Right ventricle myocardium inferior (tissue), 1 donor: ENCODE measurements at regions of chr10 and their contacts with region 1.

Region 1: DNA sequence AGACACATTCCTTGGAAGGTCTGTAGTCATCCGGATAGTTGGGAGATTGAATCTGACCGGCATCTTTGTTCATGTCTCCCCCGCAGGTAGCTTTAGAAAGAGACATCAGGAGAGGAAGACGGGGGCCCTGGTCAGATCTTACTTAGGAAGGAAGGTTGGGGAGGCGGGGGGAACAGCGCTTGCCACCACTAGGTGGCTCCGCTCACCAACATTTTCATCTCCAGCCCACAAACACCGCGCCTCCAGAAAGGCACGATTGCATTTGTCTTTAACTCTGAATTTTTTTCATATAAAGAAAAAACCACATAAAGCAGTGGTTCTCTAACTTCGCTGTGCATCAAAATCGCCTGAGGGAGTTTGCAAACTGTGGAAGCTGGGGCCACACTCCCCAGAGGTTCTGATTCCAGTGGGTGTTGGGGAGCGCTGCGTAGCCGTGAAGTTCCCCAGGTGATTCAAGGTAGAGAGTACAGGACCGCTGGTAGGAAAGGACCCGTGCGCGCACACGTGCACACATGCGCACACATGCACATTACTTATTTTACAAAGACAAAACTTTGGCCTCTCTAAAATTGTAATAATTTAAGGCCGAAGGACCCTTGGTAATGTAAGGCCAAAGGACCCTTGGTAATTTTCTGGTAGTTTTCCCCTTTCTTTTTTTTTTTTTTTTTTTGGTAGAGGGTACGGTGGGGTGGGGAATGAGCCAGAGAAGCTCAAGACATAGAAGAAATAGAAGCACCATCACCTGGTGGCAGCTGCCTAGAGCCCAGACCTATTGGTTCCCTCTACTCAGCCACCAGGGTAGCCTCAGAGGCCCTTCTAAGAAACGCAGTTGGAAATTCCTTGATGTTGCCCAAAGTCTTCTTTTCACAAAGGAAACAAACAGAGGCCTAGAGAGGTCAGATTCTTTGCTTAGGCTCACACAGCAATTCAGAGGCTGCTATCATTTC is 37.4 kb upstream of the OPALIN start:
- DNase-seq: no peak
- ATAC-seq: peak; percentile 56

Region 2: DNA sequence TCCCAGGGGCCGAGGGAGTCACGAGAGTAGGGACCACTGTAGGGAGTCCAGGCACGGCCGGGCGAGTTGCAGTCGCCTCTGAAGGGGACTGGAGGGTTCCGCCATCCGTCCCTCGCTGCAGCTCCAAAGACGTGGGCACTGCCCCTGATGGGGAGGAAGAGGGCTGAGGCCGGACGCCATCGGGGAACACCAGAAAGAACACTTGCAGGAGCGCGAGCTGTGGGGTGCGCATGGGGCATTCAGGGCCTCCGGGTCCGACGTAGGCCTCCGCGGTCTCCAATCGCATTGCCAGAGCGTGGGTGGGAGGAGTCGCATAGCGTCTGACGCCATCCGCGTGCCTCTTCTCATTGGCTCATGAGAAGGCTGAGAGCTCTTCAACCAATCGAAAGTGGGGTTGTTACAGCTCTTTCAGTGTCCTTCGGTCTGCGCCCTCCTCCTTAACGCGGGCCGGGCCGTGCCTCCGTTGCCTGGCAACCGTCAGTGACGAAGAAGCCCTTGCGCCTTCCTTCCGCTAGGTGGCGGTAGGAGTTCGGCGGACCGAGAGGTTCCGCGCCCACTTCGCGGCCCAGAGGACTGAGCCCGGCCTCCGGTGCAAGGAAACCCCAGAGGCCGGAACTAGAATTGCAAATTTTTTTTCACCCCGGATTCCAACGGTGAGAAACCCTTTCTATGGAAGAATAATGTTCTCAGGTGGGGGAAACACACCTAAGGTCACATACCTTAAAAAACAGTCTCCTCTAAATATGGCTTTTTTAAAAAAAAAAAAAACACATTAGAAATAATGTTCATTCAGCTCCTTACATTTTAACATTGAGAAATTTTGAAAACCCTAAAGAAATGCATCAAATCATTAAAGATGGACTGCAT is 702.3 kb before region 1 on chr10 and contains the start of gene TCTN3:
- intact Hi-C with region 1: no loop called
- DNase-seq: peak; percentile 99
- ATAC-seq: peak; percentile 100
- total RNA-seq, gene TCTN3: 9.7 TPM

Region 3: GRCh38 chr10:96413151-96413787 is 17.1 kb after region 1 on chr10:
- intact Hi-C with region 1: loop called (anchors 2 kb)
- DNase-seq: no peak
- ATAC-seq: peak; percentile 59

Region 4: GRCh38 chr10:96513698-96514561 is 117.7 kb after region 1 on chr10 and contains the start of gene TLL2:
- intact Hi-C with region 1: loop called (anchors 1 kb)
- DNase-seq: peak; percentile 93
- ATAC-seq: peak; percentile 96
- total RNA-seq, gene TLL2: 10.8 TPM

Region 5: DNA sequence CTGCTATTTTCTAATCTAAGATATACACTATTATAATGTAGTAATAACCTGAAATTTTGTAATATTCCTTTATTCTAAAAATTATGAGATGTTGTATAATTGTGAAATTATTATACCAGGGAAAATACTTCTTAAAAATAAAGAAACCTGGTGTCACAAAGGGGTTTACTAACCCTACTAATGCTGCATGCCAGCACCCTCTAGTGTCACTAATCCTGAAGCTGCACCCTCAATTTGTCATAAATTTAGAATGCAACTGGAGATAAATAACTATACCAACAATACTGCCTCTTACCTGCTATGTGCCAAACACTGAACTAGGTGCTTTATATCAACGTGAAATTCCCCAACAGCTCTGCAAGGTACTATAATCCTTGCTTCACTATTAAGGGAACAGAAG is 159.8 kb after region 1 on chr10:
- intact Hi-C with region 1: loop called (anchors 5 kb)
- DNase-seq: no peak
- ATAC-seq: no peak

Region 6: GRCh38 chr10:96719850-96720421 is 323.7 kb after region 1 on chr10:
- intact Hi-C with region 1: loop called (anchors 10 kb)
- DNase-seq: peak; percentile 88
- ATAC-seq: peak; percentile 68

Region 7: DNA sequence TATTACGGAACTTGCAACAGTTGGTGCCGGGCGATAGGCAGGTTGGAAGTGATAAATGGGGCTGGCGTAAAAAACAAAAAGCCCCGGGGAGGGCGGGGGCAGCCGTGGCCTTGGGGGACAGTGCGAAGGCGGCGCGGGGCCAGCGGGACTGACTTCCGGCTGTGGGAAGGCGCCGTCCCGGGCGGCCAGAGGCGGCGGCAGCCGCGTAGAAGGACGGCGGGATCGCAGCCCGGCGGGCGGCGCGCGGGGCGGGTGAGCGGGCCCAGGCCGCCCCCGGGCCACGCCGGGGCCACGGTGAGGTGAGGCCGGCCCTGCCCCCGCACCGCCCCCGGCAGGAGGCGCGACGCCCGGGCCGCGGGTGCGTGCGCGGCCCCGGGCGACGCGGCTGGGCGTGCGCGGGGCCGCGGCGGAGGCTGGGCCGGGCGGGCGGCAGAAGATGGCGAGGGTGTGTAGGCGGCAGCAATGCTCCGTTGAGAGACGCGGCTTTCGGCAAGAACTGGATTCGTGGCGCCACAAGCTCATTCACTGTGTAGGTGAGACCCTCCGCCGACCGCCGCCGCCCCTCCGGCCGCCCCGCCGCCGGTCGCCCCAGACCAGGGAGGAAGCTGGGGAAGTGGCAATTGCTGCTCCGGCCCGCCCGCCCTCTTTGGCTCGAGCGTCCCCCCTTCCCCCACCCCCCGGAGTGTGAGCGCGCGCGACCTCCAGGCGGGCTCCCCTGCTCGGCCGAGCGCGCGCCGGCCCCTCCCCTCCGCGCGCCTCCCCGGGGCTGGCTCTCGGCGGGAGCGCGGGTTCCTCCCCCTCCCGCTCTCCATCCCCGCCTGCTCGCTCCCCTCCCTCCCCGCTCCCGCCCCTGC is 435.9 kb after region 1 on chr10 and contains the start of gene LCOR:
- intact Hi-C with region 1: loop called (anchors 5 kb)
- DNase-seq: peak; percentile 93
- ATAC-seq: peak; percentile 91
- total RNA-seq, gene LCOR: 21.7 TPM

Region 8: GRCh38 chr10:97701438-97702069 is 1305.3 kb after region 1 on chr10:
- intact Hi-C with region 1: loop called (anchors 5 kb)
- DNase-seq: no peak
- ATAC-seq: peak; percentile 72